Motor neuron (in vitro differentiated cells): ENCODE measurements at regions of chr10 and their contacts with region 1.

Region 1: GRCh38 chr10:11533328-11533781 is 78.1 kb downstream of the USP6NL start:
- ATAC-seq: peak in 3 of 8 experiments; percentile 44 to 59 (median 58)
- H3K4me3 ChIP-seq: no peak overlapping the region
- H3K27ac ChIP-seq: no peak overlapping the region
- H3K4me1 ChIP-seq: no peaks in the 10 kb centered on the region

Region 2: DNA sequence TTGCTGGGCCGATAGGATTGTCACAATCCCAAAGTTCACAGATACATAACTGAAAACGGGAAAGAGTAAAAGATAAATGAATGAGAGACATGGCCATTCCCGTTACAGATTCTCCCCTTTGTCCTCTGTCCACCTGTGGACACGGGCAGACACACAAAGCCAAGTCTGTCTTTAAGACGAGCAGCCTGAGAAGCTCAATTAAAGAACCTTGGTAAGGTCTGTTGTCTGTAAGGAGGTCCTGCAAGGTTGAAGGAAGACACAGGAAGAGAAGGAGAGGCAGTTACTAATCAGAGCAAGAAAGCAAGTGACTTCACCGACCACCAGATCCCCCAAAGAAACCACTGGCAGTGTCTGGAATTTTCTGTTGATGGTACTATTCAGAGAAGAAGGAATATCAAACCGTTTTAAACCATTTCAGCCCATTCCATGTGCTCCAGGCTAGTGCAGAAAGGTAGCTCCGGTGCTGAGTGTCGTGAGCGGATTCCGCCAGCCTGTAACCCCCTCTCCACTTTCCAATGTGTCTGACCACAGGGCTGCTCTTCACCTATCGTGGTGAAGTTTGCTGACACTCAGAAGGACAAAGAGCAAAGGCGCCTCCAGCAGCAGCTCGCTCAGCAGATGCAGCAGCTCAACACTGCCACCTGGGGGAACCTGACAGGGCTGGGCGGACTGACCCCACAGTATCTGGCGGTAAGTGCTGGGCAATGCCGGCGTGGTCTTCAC is 263.1 kb before region 1 on chr10:
- in situ Hi-C with region 1: no loop called
- ATAC-seq: peak; percentile 82 to 96 (median 90)
- H3K4me3 ChIP-seq: no peak overlapping the region
- H3K27ac ChIP-seq: no peak overlapping the region
- H3K4me1 ChIP-seq: peaks cover 35 to 49% of the 10 kb centered on the region in 2 donors

Region 3: DNA sequence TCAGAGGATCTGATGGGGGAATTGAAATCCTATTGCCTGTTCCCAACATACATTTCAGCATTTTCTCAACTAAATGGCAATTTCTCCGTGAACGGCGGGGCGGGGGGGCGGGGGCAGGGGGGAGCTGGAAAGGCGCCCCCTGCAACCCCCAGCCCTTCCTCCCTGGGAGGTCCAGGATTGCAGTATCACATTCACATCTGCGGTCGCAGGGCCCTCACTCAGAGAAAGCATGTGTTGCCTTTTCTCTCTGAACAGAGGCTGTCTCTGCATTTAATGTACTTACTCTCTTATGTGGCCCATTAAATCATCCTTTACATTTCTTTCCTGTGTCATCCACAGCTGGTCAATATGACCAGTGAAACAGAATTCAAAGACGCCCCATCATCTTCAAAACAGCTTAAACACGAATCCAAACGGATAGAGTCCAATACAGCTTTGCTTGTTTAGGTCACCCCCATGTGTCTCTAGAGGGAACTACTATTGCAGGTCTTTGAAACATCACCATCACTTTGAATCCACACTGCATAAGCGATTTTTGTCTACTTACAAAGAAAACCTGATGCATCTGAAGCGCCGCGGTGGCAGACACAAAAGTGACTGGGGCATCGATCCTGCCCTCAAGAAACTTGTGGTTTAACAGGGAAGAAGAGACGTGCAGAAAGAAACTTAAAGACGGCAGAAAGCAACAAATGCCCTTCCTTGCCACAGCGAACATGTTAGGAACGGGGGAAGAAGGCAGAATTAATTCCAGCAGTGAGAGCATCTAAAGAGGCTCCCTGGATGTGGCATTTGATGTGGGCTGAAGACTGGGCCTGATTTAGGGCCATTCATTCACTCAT is 191.8 kb after region 1 on chr10:
- in situ Hi-C with region 1: loop called in 1 of 9 experiments (anchors 25 kb)
- ATAC-seq: peak in 4 of 8 experiments; percentile 61 to 92 (median 84)
- H3K4me3 ChIP-seq: no peak overlapping the region
- H3K27ac ChIP-seq: no peak overlapping the region
- H3K4me1 ChIP-seq: no peaks in the 10 kb centered on the region